ENCODE measurements at regions of chr6 and their contacts with region 1.

Region 1: DNA sequence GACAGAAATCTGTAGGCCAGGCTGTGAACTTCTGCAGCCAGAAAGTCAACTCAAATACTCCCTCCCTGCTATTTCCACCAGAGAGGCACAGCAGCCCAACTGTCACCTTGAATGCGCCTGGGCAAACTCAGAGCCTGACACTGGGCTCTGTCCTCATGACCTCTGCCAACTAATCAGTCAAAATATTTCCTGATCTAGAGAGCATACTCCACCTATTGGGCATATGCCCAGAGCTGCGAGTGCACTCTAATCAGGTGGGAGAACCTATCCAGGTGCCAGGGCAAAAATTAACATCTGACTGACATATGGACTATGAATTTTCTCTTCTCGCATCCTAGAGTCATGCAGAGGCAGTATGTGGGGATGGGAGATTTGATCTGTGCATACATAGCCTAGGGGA is 406.3 kb upstream of the RUNX2 start:
- DNase-seq: no peak
- ATAC-seq: peak; percentile 95

Region 2: DNA sequence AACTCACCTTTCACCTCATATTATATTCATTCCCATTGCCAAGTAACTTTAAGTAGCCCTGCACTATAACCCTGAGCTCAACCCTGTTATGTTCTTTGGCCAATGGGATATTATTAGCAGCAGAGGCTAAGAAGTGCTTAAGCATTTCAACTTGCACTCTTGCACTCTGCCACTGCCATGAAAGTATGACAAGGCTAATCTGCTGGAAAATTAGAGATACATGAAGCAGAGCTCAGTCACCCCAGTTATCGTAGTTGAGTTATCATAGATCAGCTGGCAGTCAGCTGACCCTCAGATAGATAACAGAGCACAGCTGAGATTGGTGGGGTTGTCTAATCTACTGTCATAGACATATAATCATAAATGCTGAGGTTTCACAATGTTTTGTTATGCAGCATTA is 197.0 kb after region 1 on chr6:
- intact Hi-C with region 1: loop called (anchors 2 kb)
- DNase-seq: no peak
- ATAC-seq: peak; percentile 80

Region 3: GRCh38 chr6:45187836-45188235 is 266.0 kb after region 1 on chr6:
- intact Hi-C with region 1: no loop called
- DNase-seq: no peak
- ATAC-seq: no peak